ENCODE measurements at regions of chr3 and their contacts with region 1.

Region 1: DNA sequence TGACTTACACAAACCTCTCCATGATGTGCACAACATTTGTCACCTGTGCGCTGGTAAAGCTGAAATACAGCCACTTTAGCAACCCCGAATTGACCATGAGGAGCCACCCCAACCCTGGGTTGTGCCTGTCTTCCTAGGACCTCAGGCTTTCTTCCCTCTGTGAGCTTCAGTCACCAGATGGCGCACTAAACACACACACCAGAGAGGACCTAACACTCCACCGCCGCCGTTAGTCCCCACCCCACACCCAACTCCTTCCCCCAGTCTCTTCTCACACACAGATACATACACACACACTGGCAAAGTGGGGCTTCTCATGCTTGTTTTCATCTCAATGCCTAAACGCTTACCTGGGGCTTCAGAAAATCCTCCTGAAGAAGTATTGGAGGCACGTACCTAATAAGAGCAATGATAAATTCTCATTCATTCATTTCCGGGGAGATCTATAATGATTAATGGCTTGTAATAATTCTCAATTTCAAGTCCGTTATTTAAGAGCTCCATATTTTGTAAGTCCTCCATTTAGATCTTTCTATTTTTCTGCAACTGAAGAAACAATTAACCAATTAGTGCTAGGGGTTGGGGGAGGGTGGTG is 2.1 kb upstream of the CCDC80 start:
- DNase-seq: peak; percentile 83 to 87
- H3K4me3 ChIP-seq: no peak overlapping the region
- H3K4me3 Mint-ChIP-seq: peak overlapping the region; percentile 15
- H3K27ac Mint-ChIP-seq: peak overlapping the region; percentile 13
- H3K4me1 ChIP-seq: peaks cover 38% of the 10 kb centered on the region
- H3K4me1 Mint-ChIP-seq: peaks cover 23% of the 10 kb centered on the region
- H3K27me3 ChIP-seq: no peaks in the 10 kb centered on the region
- H3K27me3 Mint-ChIP-seq: no peaks in the 10 kb centered on the region
- CTCF ChIP-seq: peak; percentile 73 to 82

Region 2: GRCh38 chr3:112582244-112582874 is 60.6 kb before region 1 on chr3:
- CTCF ChIA-PET with region 1: interaction called, 4 read pairs
- POLR2A ChIA-PET with region 1: no interaction called
- intact Hi-C with region 1: loop called (anchors 1 kb)
- DNase-seq: peak in 1 of 2 experiments; percentile 49
- H3K4me3 ChIP-seq: no peak overlapping the region
- H3K4me3 Mint-ChIP-seq: no peak overlapping the region
- H3K27ac Mint-ChIP-seq: no peak overlapping the region
- H3K4me1 ChIP-seq: no peaks in the 10 kb centered on the region
- H3K4me1 Mint-ChIP-seq: no peaks in the 10 kb centered on the region
- H3K27me3 ChIP-seq: no peaks in the 10 kb centered on the region
- H3K27me3 Mint-ChIP-seq: no peaks in the 10 kb centered on the region
- CTCF ChIP-seq: peak; percentile 51 to 62

Region 3: DNA sequence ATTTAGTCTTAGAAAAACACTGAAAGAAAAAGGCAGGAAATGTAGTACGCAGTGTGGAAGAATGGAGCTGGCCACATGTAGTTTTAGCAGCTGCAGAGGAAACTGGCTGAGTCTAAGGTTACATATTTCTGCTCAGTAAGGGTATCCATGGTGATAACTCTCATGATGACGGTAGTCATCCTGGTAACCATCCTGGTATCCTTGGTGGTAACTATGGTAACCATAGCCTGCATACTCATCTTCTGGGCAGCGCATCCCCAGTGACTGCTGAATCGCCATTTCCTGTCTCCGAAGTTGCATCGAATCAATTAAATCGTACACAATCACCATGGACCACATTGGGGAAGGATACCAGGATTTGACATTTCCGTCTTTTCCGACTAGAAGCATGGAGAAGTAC is 37.7 kb before region 1 on chr3:
- CTCF ChIA-PET with region 1: no interaction called
- POLR2A ChIA-PET with region 1: no interaction called
- intact Hi-C with region 1: no loop called
- DNase-seq: no peak
- H3K4me3 ChIP-seq: no peak overlapping the region
- H3K4me3 Mint-ChIP-seq: no peak overlapping the region
- H3K27ac Mint-ChIP-seq: no peak overlapping the region
- H3K4me1 ChIP-seq: no peaks in the 10 kb centered on the region
- H3K4me1 Mint-ChIP-seq: no peaks in the 10 kb centered on the region
- H3K27me3 ChIP-seq: no peaks in the 10 kb centered on the region
- H3K27me3 Mint-ChIP-seq: no peaks in the 10 kb centered on the region
- CTCF ChIP-seq: no peak

Region 4: GRCh38 chr3:112688819-112689218 is 45.8 kb after region 1 on chr3:
- CTCF ChIA-PET with region 1: no interaction called
- POLR2A ChIA-PET with region 1: no interaction called
- intact Hi-C with region 1: loop called (anchors 1 kb)
- DNase-seq: no peak
- H3K4me3 ChIP-seq: no peak overlapping the region
- H3K4me3 Mint-ChIP-seq: no peak overlapping the region
- H3K27ac Mint-ChIP-seq: no peak overlapping the region
- H3K4me1 ChIP-seq: peaks cover 56% of the 10 kb centered on the region
- H3K4me1 Mint-ChIP-seq: peaks cover 35% of the 10 kb centered on the region
- H3K27me3 ChIP-seq: no peaks in the 10 kb centered on the region
- H3K27me3 Mint-ChIP-seq: no peaks in the 10 kb centered on the region
- CTCF ChIP-seq: no peak

Region 5: DNA sequence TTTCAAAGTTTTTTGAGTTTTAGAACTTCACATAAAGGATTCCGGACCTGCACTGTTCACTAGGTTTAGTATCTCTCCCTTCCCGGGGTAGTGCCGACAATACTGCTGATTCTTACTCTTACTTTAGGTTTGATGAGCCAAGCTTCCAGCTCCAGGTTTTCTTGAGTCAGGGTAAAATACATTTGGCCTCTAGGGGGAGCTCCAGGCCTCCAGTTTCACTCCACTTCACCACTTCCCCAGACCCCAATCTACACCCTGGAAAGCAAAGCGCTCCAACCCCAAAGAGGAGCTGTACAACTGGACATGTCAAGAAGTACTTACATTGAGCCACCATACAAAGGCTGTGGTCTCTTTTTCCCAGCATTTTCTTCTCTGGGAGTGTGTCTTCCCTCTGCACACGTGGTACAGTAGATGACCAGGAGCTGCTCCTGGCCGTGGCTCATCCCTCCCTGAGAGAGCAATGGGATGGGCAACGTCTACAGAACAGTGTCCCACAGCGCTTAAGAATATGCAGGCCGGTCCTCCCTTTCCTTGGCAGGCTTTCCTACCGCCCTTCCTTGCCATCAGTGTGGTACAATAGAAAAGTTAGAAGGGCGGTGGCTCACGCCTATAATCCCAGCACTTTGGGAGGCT is 91.8 kb after region 1 on chr3:
- CTCF ChIA-PET with region 1: interaction called, 11 read pairs
- POLR2A ChIA-PET with region 1: interaction called, 3 read pairs
- intact Hi-C with region 1: loop called (anchors 1 kb)
- DNase-seq: peak; percentile 67 to 76
- H3K4me3 ChIP-seq: no peak overlapping the region
- H3K4me3 Mint-ChIP-seq: no peak overlapping the region
- H3K27ac Mint-ChIP-seq: no peak overlapping the region
- H3K4me1 ChIP-seq: peaks cover 19% of the 10 kb centered on the region
- H3K4me1 Mint-ChIP-seq: peaks cover 18% of the 10 kb centered on the region
- H3K27me3 ChIP-seq: no peaks in the 10 kb centered on the region
- H3K27me3 Mint-ChIP-seq: no peaks in the 10 kb centered on the region
- CTCF ChIP-seq: peak; percentile 63 to 81

Region 6: GRCh38 chr3:112979240-112979832 is 336.3 kb after region 1 on chr3:
- CTCF ChIA-PET with region 1: interaction called, 6 read pairs
- POLR2A ChIA-PET with region 1: no interaction called
- intact Hi-C with region 1: loop called (anchors 1 kb)
- DNase-seq: peak in 1 of 2 experiments; percentile 39
- H3K4me3 ChIP-seq: no peak overlapping the region
- H3K4me3 Mint-ChIP-seq: no peak overlapping the region
- H3K27ac Mint-ChIP-seq: no peak overlapping the region
- H3K4me1 ChIP-seq: no peaks in the 10 kb centered on the region
- H3K4me1 Mint-ChIP-seq: peaks cover 6% of the 10 kb centered on the region
- H3K27me3 ChIP-seq: no peaks in the 10 kb centered on the region
- H3K27me3 Mint-ChIP-seq: no peaks in the 10 kb centered on the region
- CTCF ChIP-seq: peak; percentile 55 to 76

Region 7: GRCh38 chr3:113287803-113288648 is 645.0 kb after region 1 on chr3:
- CTCF ChIA-PET with region 1: no interaction called
- POLR2A ChIA-PET with region 1: no interaction called
- intact Hi-C with region 1: loop called (anchors 1 kb)
- DNase-seq: peak in 1 of 2 experiments; percentile 58
- H3K4me3 ChIP-seq: no peak overlapping the region
- H3K4me3 Mint-ChIP-seq: no peak overlapping the region
- H3K27ac Mint-ChIP-seq: no peak overlapping the region
- H3K4me1 ChIP-seq: no peaks in the 10 kb centered on the region
- H3K4me1 Mint-ChIP-seq: peaks cover under 1% of the 10 kb centered on the region
- H3K27me3 ChIP-seq: no peaks in the 10 kb centered on the region; the same call in 1 of the 2 replicates
- H3K27me3 Mint-ChIP-seq: peaks cover 5% of the 10 kb centered on the region
- CTCF ChIP-seq: peak; percentile 95 to 98

Measured in Caco-2 (cell line).